Activated T-helper 1 cell treated with anti-CD3 and anti-CD28 coated beads, Interleukin-12 subunit alpha, Interleukin-12 subunit beta, Interleukin-2, Interleukin-4 antibody, amounts not matched to agents 30 ng/mL and 10 ng/mL and 1 ng/mL, durations not matched to agents 14 hours and 24 hours and 36 hours (primary cell): ENCODE measurements at regions of chr19 and their contacts with region 1.

Region 1: DNA sequence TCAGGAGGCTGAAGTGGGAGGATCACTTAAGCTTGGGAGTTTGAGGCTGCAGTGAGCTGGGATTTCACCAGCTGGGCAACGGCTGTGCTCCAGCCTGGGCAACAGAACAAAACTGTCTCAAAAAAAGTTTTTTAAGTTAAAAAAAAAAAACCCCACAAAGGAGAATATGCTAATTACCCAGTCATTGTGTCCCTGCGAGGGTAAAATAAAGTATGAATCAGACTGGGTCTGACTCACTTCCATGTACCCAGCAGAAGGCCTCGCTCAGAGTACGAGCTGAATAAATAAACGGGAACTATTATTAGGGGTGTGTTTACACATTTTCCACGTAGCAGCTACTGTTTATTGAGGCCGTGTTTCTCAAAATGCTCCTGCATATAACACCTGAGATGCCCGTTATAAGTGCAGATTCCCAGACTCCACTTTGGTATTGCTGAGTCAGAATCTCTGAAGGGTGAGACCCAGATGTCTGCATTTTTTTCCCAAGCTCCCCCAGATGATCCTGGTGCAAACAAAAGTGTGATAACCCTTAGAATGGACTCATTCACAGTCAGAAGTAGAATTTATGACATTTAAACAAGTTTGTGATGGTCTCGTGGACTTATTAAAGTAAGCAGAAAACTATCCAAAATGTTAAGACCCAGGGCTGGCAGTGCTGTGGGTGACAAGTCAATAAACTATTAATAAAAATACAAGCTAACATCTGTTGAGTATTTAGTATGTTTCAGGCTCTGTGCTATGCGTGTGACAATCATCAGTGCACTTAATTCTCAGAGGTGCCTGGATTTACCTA is 28.2 kb downstream of the KCNC3 start:
- DNase-seq: no peak
- H3K4me3 Mint-ChIP-seq: no peak overlapping the region
- H3K27ac Mint-ChIP-seq: no peak overlapping the region
- H3K4me1 Mint-ChIP-seq: peaks cover 16% of the 10 kb centered on the region
- H3K27me3 Mint-ChIP-seq: peaks cover 2% of the 10 kb centered on the region

Region 2: DNA sequence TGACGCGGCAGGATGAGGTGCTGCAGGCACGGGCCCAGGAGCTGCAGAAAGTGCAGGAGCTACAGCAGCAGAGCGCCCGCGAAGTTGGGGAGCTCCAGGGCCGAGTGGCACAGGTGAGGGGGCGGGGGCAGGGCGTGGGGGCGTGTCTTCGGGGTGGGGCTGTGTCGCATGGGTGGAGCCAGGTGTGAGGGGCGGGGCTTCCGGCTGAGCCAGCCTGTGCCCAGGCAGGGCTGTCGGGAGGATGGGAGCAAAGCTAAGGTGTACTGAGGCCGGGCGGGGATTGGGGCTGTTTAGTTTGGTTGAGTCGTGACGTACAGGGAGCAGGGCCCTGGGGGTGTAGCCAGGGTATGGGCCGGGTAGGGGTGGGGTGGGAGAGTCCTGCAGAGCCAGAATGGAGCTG is 34.1 kb before region 1 on chr19:
- intact Hi-C with region 1: no loop called
- DNase-seq: no peak
- H3K4me3 Mint-ChIP-seq: no peak overlapping the region
- H3K27ac Mint-ChIP-seq: no peak overlapping the region
- H3K4me1 Mint-ChIP-seq: no peaks in the 10 kb centered on the region
- H3K27me3 Mint-ChIP-seq: peaks cover 4% of the 10 kb centered on the region

Region 3: DNA sequence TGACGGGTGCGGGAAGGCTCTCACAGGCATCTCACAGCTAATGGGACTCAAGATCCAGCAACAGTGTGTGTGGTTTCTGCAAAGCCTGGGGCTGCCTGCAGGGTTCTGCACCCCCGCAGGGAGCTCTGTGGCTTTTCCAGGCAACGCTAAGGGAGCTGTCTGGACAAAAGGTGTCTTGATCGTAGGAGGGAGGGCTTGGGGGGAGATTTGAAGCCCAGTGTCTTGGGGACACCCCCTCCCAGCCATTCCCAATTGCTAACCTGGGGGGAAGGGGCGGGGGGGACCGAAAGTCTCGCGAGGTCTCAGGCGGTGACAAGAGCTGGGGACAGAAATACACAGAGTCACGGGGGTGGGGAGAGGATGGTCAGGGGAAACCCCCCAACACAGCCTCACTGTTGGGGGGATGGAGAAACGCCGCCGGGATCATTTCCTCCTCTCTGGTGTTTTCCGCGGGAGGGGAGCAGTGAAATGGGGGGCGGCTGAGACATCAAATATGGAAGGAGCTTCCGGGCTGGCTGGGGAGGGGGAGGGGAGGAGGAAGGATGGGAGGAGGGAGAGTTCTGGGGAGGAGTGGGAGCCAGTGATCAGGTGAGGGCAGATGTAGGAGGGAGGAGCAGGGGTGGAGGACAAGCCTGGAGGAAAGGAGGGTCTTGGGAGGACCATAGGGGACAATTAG is 14.9 kb after region 1 on chr19:
- intact Hi-C with region 1: loop called (anchors 2 kb)
- DNase-seq: no peak
- H3K4me3 Mint-ChIP-seq: peak overlapping the region; percentile 81
- H3K27ac Mint-ChIP-seq: peak overlapping the region; percentile 55
- H3K4me1 Mint-ChIP-seq: peaks cover 18% of the 10 kb centered on the region
- H3K27me3 Mint-ChIP-seq: peaks cover 38% of the 10 kb centered on the region